Heart right ventricle (tissue), 16 donors: ENCODE measurements at regions of chr1 and their contacts with region 1.

Region 1: DNA sequence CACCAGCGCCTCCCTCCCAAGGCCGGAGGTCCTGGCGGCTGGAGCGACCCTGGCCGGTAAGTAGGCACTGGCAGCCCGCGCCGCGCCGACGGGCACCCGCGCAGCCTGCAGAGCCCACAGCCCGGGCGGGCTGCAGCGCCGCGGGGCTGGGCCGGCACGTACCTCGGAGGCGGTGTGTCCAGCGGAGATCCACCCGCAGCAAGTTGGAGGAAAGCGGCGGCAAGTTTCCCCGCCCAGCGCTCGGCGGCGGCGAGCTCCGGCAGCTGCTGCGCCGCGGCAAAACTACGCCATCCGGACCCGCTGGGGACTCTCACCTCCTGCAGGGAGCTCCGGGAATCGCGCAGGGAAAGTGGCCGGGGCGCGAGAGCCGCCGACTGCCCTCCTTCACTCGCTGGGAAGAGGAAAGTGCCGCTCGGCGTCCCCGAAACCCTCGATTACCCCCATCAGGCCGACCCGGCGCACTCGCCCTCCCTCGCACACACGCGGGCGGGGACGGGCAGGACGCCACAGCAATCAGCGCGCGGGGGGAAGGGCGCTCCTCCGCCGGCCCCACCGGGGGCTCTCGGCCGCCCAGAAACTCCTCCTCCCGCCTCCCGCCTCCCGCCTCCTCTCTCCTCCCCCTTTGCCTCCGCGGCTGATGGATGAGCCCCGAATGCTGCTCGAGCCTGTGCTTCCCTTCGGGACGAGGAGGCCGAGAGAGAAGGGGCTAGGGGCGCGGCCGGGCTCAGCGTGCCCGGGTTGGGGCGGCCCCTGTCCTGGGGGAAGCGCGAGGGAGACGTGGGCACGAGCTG is at the start of gene TGFBR3:
- DNase-seq: peak; percentile 94 to 96
- ATAC-seq: peak; percentile 94 to 98 (median 97)
- H3K4me3 ChIP-seq: peak within 1 kb of the TSS; percentile 78 to 100 (median 91)
- H3K27ac ChIP-seq: peak within 1 kb of the TSS; percentile 88 to 98 (median 92)
- H3K4me1 ChIP-seq: peaks cover 0 to 52% (median 27%) of the 10 kb centered on the region in 9 donors
- H3K27me3 ChIP-seq: peaks cover 0 to 44% (median 0%) of the 10 kb centered on the region in 7 donors
- CTCF ChIP-seq: peak; percentile 20 to 74 (median 56)
- total RNA-seq, gene TGFBR3: 11.9 to 36.7 (median 26.4) TPM

Region 2: GRCh38 chr1:91555821-91556531 is 329.9 kb before region 1 on chr1:
- intact Hi-C with region 1: loop called in 1 of 10 experiments (anchors 10 kb)
- DNase-seq: no peak
- ATAC-seq: peak in 2 of 8 donors; percentile 39
- H3K4me3 ChIP-seq: no peak overlapping the region
- H3K27ac ChIP-seq: peak overlapping the region in 1 of 10 donors; percentile 81
- H3K4me1 ChIP-seq: peaks cover 0 to 58% (median 0%) of the 10 kb centered on the region in 9 donors
- H3K27me3 ChIP-seq: no peaks in the 10 kb centered on the region
- CTCF ChIP-seq: no peak

Region 3: GRCh38 chr1:91635763-91636162 is 250.1 kb before region 1 on chr1:
- intact Hi-C with region 1: no loop called
- DNase-seq: no peak
- ATAC-seq: peak in 1 of 8 donors; percentile 35
- H3K4me3 ChIP-seq: no peak overlapping the region
- H3K27ac ChIP-seq: no peak overlapping the region
- H3K4me1 ChIP-seq: peaks cover 0 to 6% (median 0%) of the 10 kb centered on the region in 9 donors
- H3K27me3 ChIP-seq: no peaks in the 10 kb centered on the region
- CTCF ChIP-seq: no peak

Region 4: DNA sequence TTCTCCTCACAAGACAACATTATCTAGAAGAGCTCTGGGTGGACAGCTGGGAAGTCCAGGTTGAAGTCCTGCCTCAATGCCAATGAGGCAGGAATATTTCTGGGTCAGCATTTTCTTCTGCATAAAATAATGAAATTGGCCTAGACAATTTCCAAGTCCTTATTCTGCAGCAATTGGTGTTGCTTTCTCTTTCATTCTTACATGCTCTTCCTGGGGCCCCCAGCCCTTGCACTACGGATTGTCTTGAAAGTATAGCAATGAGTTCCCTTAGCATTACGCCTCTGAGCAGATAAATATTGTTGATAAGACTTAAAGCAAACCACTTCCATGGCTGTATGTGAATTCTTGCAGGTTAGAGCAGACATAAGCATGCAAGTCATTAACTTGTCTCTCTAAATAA is 188.5 kb before region 1 on chr1:
- intact Hi-C with region 1: loop called in 1 of 10 experiments (anchors 10 kb)
- DNase-seq: no peak
- ATAC-seq: no peak
- H3K4me3 ChIP-seq: no peak overlapping the region
- H3K27ac ChIP-seq: peak overlapping the region in 7 of 10 donors; percentile 9 to 68 (median 44)
- H3K4me1 ChIP-seq: peaks cover 0 to 76% (median 65%) of the 10 kb centered on the region in 9 donors
- H3K27me3 ChIP-seq: no peaks in the 10 kb centered on the region
- CTCF ChIP-seq: no peak

Region 5: GRCh38 chr1:91712981-91713841 is 172.7 kb before region 1 on chr1:
- intact Hi-C with region 1: loop called in 4 of 10 experiments (anchors 5 to 10 kb)
- DNase-seq: peak; percentile 56 to 67
- ATAC-seq: peak; percentile 74 to 89 (median 85)
- H3K4me3 ChIP-seq: peak overlapping the region in 7 of 10 donors; percentile 0 to 28 (median 4)
- H3K27ac ChIP-seq: peak overlapping the region; percentile 67 to 87 (median 80)
- H3K4me1 ChIP-seq: peaks cover 13 to 58% (median 33%) of the 10 kb centered on the region in 9 donors
- H3K27me3 ChIP-seq: no peaks in the 10 kb centered on the region
- CTCF ChIP-seq: peak in 1 of 9 donors; percentile 11

Region 6: DNA sequence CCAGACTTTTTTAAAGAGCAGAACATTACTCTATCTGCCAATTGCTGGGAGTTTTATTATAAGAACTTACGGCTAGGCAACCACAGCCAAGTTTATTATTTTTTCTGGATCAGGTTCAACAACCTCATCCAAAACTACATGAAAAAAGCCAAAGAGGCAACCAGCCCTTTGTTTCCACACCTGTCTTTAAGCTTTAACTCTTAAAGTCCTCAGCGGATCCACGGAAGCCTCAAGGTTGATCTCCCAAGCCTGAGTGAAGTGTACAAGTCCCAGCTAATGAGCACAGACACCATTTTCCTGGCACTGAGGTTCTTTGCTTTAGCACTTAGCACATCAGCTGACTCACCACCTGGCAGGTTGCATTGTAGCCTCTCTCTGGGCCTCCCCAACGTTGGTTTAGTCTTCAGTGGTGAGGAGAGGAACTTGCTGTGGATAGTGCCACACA is 143.0 kb before region 1 on chr1:
- intact Hi-C with region 1: loop called in 1 of 10 experiments (anchors 10 kb)
- DNase-seq: no peak
- ATAC-seq: peak in 7 of 8 donors; percentile 17 to 61 (median 41)
- H3K4me3 ChIP-seq: no peak overlapping the region
- H3K27ac ChIP-seq: peak overlapping the region in 6 of 10 donors; percentile 14 to 51 (median 38)
- H3K4me1 ChIP-seq: peaks cover 9 to 66% (median 39%) of the 10 kb centered on the region in 9 donors
- H3K27me3 ChIP-seq: no peaks in the 10 kb centered on the region
- CTCF ChIP-seq: no peak

Region 7: GRCh38 chr1:91795591-91796389 is 90.1 kb before region 1 on chr1:
- intact Hi-C with region 1: loop called in 1 of 10 experiments (anchors 10 kb)
- DNase-seq: no peak
- ATAC-seq: no peak
- H3K4me3 ChIP-seq: no peak overlapping the region
- H3K27ac ChIP-seq: peak overlapping the region in 2 of 10 donors; percentile 7 to 41
- H3K4me1 ChIP-seq: peaks cover 13 to 61% (median 48%) of the 10 kb centered on the region in 9 donors
- H3K27me3 ChIP-seq: no peaks in the 10 kb centered on the region
- CTCF ChIP-seq: no peak

Region 8: GRCh38 chr1:91830242-91831131 is 55.4 kb before region 1 on chr1:
- intact Hi-C with region 1: loop called in 1 of 10 experiments (anchors 2 kb)
- DNase-seq: peak; percentile 72 to 87
- ATAC-seq: peak; percentile 72 to 88 (median 78)
- H3K4me3 ChIP-seq: no peak overlapping the region
- H3K27ac ChIP-seq: peak overlapping the region; percentile 56 to 88 (median 78)
- H3K4me1 ChIP-seq: peaks cover 17 to 58% (median 42%) of the 10 kb centered on the region in 9 donors
- H3K27me3 ChIP-seq: no peaks in the 10 kb centered on the region
- CTCF ChIP-seq: peak in 7 of 9 donors; percentile 35 to 71 (median 41)

Region 9: GRCh38 chr1:91948501-91949355 is 62.8 kb after region 1 on chr1:
- intact Hi-C with region 1: no loop called
- DNase-seq: no peak
- ATAC-seq: peak in 1 of 8 donors; percentile 29
- H3K4me3 ChIP-seq: no peak overlapping the region
- H3K27ac ChIP-seq: peak overlapping the region in 1 of 10 donors; percentile 67
- H3K4me1 ChIP-seq: peaks cover 0 to 3% (median 0%) of the 10 kb centered on the region in 9 donors
- H3K27me3 ChIP-seq: no peaks in the 10 kb centered on the region
- CTCF ChIP-seq: no peak